HCT116 (cell line): ENCODE measurements at regions of chr13 and their contacts with region 1.

Region 1: GRCh38 chr13:19845758-19846157 is 17.7 kb downstream of the ZMYM5 start:
- DNase-seq: peak; percentile 77
- ATAC-seq: peak; percentile 91
- H3K4me3 ChIP-seq: no peak overlapping the region; a peak in 1 of 4 replicates
- H3K27ac ChIP-seq: no peak overlapping the region; the same call in 1 of the 2 replicates
- H3K4me1 ChIP-seq: peaks cover 14 to 16% of the 10 kb centered on the region in 2 experiments
- H3K27me3 ChIP-seq: no peaks in the 10 kb centered on the region
- CTCF ChIP-seq: no peak
- POLR2A ChIP-seq: no peak
- RAD21 ChIP-seq: no peak

Region 2: GRCh38 chr13:19863323-19864023 is 17.7 kb after region 1 on chr13 and contains the start of gene ZMYM5:
- CTCF ChIA-PET with region 1: interaction called, 3 read pairs
- POLR2A ChIA-PET with region 1: interaction called, 11 read pairs
- RAD21 ChIA-PET with region 1: no interaction called
- intact Hi-C with region 1: no loop called
- DNase-seq: peak; percentile 95
- ATAC-seq: peak; percentile 88
- H3K4me3 ChIP-seq: peak within 1 kb of the TSS; percentile 79 to 90
- H3K27ac ChIP-seq: peak within 1 kb of the TSS; percentile 98
- H3K4me1 ChIP-seq: peaks cover 23 to 41% of the 10 kb centered on the region in 2 experiments
- H3K27me3 ChIP-seq: no peaks in the 10 kb centered on the region
- CTCF ChIP-seq: no peak
- POLR2A ChIP-seq: peak; percentile 19
- RAD21 ChIP-seq: no peak
- total RNA-seq, gene ZMYM5: 9.6 TPM